CD4-positive, alpha-beta T cell (primary cell): ENCODE measurements at regions of chr13 and their contacts with region 1.

Region 1: GRCh38 chr13:30158774-30159445 is 148.4 kb downstream of the KATNAL1 start:
- DNase-seq: peak in 4 of 14 experiments; percentile 14 to 75 (median 71)
- ATAC-seq: peak; percentile 83
- H3K4me3 ChIP-seq: no peak overlapping the region
- H3K4me3 Mint-ChIP-seq: no peak overlapping the region
- H3K27ac ChIP-seq: no peak overlapping the region
- H3K27ac Mint-ChIP-seq: no peak overlapping the region
- H3K4me1 ChIP-seq: peaks cover 47% of the 10 kb centered on the region
- H3K4me1 Mint-ChIP-seq: peaks cover 49% of the 10 kb centered on the region
- H3K27me3 ChIP-seq: no peaks in the 10 kb centered on the region
- H3K27me3 Mint-ChIP-seq: no peaks in the 10 kb centered on the region
- CTCF ChIP-seq: peak; percentile 74

Region 2: DNA sequence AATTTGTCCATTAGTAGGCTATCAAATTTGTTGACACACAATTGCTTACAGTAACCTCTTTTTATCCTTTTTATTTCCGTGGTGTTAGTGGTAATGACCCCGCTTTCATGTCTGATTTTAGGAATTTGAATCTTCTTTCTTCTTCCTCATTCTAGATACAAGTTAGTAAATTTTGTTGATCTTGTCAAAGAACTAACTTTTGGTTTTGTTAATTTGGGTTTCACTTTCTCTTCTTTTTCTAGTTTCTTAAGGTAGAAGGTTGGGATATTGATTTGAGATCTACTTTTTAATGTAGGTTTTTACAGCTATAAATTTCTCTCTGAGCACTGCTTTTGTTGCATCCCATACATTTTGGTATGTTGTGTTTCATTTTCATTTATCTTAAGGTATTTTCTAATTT is 510.1 kb before region 1 on chr13:
- CTCF ChIA-PET with region 1: no interaction called
- POLR2A ChIA-PET with region 1: no interaction called
- intact Hi-C with region 1: no loop called
- DNase-seq: no peak
- ATAC-seq: no peak
- H3K4me3 ChIP-seq: no peak overlapping the region
- H3K4me3 Mint-ChIP-seq: no peak overlapping the region
- H3K27ac ChIP-seq: no peak overlapping the region
- H3K27ac Mint-ChIP-seq: no peak overlapping the region
- H3K4me1 ChIP-seq: no peaks in the 10 kb centered on the region
- H3K4me1 Mint-ChIP-seq: peaks cover 4% of the 10 kb centered on the region
- H3K27me3 ChIP-seq: no peaks in the 10 kb centered on the region
- H3K27me3 Mint-ChIP-seq: no peaks in the 10 kb centered on the region
- CTCF ChIP-seq: no peak

Region 3: GRCh38 chr13:29771247-29771646 is 387.7 kb before region 1 on chr13:
- CTCF ChIA-PET with region 1: no interaction called
- POLR2A ChIA-PET with region 1: no interaction called
- intact Hi-C with region 1: loop called in 1 of 2 experiments (anchors 1 kb)
- DNase-seq: peak in 3 of 14 experiments; percentile 64 to 69 (median 67)
- ATAC-seq: peak; percentile 75
- H3K4me3 ChIP-seq: no peak overlapping the region
- H3K4me3 Mint-ChIP-seq: no peak overlapping the region
- H3K27ac ChIP-seq: no peak overlapping the region
- H3K27ac Mint-ChIP-seq: no peak overlapping the region
- H3K4me1 ChIP-seq: no peaks in the 10 kb centered on the region
- H3K4me1 Mint-ChIP-seq: peaks cover 8% of the 10 kb centered on the region
- H3K27me3 ChIP-seq: no peaks in the 10 kb centered on the region
- H3K27me3 Mint-ChIP-seq: no peaks in the 10 kb centered on the region
- CTCF ChIP-seq: peak; percentile 78

Region 4: GRCh38 chr13:30148171-30148754 is 10.6 kb before region 1 on chr13:
- CTCF ChIA-PET with region 1: interaction called, 3 read pairs
- POLR2A ChIA-PET with region 1: interaction called, 10 read pairs
- intact Hi-C with region 1: no loop called
- DNase-seq: peak in 12 of 14 experiments; percentile 24 to 91 (median 48)
- ATAC-seq: peak; percentile 91
- H3K4me3 ChIP-seq: no peak overlapping the region
- H3K4me3 Mint-ChIP-seq: peak overlapping the region; percentile 73
- H3K27ac ChIP-seq: peak overlapping the region; percentile 58 to 82
- H3K27ac Mint-ChIP-seq: peak overlapping the region; percentile 91
- H3K4me1 ChIP-seq: peaks cover 90% of the 10 kb centered on the region
- H3K4me1 Mint-ChIP-seq: peaks cover 94% of the 10 kb centered on the region
- H3K27me3 ChIP-seq: no peaks in the 10 kb centered on the region
- H3K27me3 Mint-ChIP-seq: no peaks in the 10 kb centered on the region
- CTCF ChIP-seq: no peak